Activated CD4-positive, alpha-beta memory T cell treated with anti-CD3 and anti-CD28 coated beads for 36 hours (primary cell): ENCODE measurements at regions of chr6 and their contacts with region 1.

Region 1: DNA sequence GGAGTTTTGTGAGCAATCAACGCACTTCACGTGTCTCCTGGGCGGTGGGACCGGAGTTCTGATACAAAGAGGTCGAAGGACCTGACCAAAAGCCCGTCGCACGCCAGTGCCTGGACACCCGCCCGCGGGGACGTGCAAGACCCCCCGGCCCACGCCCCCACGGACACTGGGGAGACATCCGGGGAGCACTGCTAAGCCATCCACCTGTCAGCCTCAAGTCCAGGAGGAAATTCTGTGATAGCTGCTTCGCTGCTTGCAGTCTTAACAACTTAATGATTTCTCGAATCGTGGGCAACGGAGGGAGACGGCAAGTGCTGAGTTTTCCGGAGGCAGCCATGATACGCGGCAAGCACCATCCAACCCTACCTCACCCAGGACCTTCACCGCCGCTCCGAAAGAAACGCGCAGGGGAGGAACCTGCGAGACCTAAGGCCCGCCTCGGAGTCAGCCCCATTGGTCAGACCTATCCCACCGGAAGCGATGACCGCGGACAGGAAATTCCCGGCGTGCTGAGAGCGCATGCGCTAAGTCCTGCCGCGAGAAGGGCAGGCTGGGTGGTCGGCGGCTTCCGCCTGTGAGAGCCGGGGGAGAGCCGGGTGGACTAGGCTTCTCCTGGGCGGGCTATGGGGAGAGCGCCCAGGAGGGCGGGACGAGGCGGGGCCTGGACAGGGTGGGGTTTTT is at the start of gene TFB1M:
- DNase-seq: peak; percentile 99
- H3K4me3 Mint-ChIP-seq: peak within 1 kb of the TSS; percentile 98
- H3K27ac Mint-ChIP-seq: peak within 1 kb of the TSS; percentile 96
- H3K4me1 Mint-ChIP-seq: peaks cover 38% of the 10 kb centered on the region
- H3K27me3 Mint-ChIP-seq: no peaks in the 10 kb centered on the region
- total RNA-seq, gene TFB1M: 45.1 to 48.5 TPM

Region 2: GRCh38 chr6:154432533-154433476 is 881.4 kb before region 1 on chr6:
- CTCF ChIA-PET with region 1: no interaction called
- POLR2A ChIA-PET with region 1: no interaction called
- intact Hi-C with region 1: no loop called
- DNase-seq: no peak
- H3K4me3 Mint-ChIP-seq: no peak overlapping the region
- H3K27ac Mint-ChIP-seq: no peak overlapping the region
- H3K4me1 Mint-ChIP-seq: no peaks in the 10 kb centered on the region
- H3K27me3 Mint-ChIP-seq: no peaks in the 10 kb centered on the region

Region 3: DNA sequence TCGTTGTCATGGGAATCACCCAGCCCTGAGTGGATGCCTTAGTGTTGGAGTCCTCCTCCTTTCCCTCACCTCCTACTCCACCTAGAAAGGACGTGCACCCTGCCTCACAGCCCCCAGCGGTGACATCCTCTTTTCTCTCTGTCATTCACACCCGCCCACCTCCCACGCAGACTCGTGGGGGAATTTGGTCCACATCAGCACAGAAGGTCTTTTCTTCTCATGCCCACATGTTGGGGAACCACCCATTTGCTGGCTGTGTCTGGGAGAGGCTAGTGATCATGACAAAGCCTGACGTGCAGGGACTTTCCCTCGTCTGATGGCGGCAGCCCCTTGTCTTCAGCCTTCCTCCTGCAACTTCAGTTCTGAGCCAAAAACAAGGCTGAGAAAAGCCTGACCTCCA is 707.8 kb before region 1 on chr6:
- CTCF ChIA-PET with region 1: no interaction called
- POLR2A ChIA-PET with region 1: no interaction called
- intact Hi-C with region 1: loop called (anchors 5 kb)
- DNase-seq: peak; percentile 96
- H3K4me3 Mint-ChIP-seq: peak overlapping the region; percentile 24
- H3K27ac Mint-ChIP-seq: peak overlapping the region; percentile 67
- H3K4me1 Mint-ChIP-seq: peaks cover 43% of the 10 kb centered on the region
- H3K27me3 Mint-ChIP-seq: peaks cover 4% of the 10 kb centered on the region

Region 4: DNA sequence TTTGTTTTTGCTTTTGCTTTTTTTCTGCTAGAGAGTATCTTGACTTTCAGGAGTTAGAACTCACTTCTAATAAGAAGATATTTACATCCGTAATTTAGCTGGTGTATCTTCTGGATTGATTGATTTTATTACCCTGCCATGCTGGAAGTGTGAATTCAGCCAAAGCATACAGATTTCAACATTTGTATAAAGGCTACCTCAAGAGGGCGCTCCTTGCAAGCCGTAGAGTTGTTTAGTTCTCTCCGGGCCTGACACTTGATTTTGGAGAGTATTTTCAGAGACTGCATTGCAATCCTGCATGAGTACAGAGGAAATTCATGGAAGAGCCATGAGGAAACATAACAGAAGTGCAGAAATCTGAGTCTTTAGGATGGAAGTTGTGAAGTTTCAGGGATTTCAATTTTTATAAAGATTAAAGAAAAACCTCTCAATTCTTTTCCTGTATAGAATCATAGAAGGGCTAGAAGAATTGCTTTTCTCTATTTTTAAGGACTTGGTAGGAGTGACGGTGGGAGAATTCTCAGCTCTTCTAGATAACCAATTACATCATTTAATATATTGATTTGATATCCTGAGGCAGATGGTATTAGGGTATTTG is 385.8 kb before region 1 on chr6:
- CTCF ChIA-PET with region 1: interaction called, 5 read pairs
- POLR2A ChIA-PET with region 1: no interaction called
- intact Hi-C with region 1: loop called (anchors 2 kb)
- DNase-seq: peak; percentile 77
- H3K4me3 Mint-ChIP-seq: no peak overlapping the region
- H3K27ac Mint-ChIP-seq: no peak overlapping the region
- H3K4me1 Mint-ChIP-seq: peaks cover 9% of the 10 kb centered on the region
- H3K27me3 Mint-ChIP-seq: no peaks in the 10 kb centered on the region

Region 5: DNA sequence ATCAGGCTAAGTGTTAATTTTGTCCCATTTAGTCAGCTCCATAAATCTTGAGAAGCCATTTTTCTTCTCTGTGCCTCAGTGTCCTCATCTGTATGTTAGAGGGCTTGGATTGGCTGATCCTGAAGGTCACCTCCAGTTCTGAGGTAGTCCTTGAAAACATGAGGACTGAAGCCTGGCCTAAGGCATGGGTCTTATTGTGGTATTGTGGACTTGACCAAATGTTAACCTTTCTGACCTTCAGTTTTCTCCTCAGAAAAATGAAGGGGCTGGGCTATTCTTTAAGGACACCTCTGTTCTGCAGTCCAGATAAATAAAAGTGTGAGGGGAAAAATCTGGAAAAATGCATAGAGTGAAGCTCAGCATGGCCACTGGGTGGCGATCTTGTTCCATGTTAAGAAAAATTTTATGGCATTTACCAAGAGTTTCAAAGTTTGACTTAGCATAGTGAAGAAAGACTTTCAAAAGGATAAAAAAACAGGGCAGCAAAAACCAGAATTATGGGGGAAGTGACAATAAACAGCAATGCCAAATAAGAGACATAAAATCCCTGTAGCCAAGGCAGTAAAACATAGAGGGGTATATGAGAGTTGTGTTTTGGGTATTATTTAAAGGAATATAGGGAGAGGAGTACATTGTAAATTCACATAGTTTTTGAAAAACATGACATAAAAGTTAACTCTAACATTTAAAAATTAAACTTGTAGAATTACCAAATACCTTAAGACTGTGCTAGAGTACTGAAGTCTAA is 13.3 kb after region 1 on chr6:
- CTCF ChIA-PET with region 1: interaction called, 26 read pairs
- POLR2A ChIA-PET with region 1: interaction called, 4 read pairs
- intact Hi-C with region 1: no loop called
- DNase-seq: peak; percentile 71
- H3K4me3 Mint-ChIP-seq: no peak overlapping the region
- H3K27ac Mint-ChIP-seq: peak overlapping the region; percentile 44
- H3K4me1 Mint-ChIP-seq: peaks cover 13% of the 10 kb centered on the region
- H3K27me3 Mint-ChIP-seq: no peaks in the 10 kb centered on the region

Region 6: DNA sequence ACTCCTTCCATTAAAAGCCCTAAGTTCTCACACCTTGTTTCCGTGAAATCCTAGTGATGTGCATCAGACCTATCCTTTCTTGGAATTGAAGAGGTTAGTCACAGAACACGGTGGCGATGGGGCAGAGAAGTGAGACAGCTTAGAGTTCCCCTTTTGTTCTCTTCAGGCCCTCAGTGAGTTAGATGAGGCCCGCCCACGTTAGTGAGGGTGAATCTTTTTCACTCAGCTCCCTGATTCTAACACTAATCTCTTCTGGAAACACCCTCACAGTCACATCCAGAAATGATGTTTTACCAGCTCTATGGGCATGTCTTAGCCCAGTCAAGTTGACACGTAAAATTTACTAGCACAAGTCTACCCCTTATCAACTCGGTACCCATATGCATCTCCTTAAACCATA is 314.1 kb after region 1 on chr6:
- CTCF ChIA-PET with region 1: no interaction called
- POLR2A ChIA-PET with region 1: no interaction called
- intact Hi-C with region 1: loop called (anchors 1 kb)
- DNase-seq: peak; percentile 85
- H3K4me3 Mint-ChIP-seq: peak overlapping the region; percentile 8
- H3K27ac Mint-ChIP-seq: peak overlapping the region; percentile 95
- H3K4me1 Mint-ChIP-seq: peaks cover 18% of the 10 kb centered on the region
- H3K27me3 Mint-ChIP-seq: peaks cover 1% of the 10 kb centered on the region

Region 7: GRCh38 chr6:156776840-156777576 is 1462.8 kb after region 1 on chr6 and contains the start of gene ARID1B:
- CTCF ChIA-PET with region 1: no interaction called
- POLR2A ChIA-PET with region 1: interaction called, 3 read pairs
- intact Hi-C with region 1: loop called (anchors 5 kb)
- DNase-seq: peak; percentile 79
- H3K4me3 Mint-ChIP-seq: peak within 1 kb of the TSS; percentile 83
- H3K27ac Mint-ChIP-seq: peak within 1 kb of the TSS; percentile 95
- H3K4me1 Mint-ChIP-seq: peaks cover 20% of the 10 kb centered on the region
- H3K27me3 Mint-ChIP-seq: no peaks in the 10 kb centered on the region
- total RNA-seq, gene ARID1B: 39.0 to 41.5 TPM

Region 8: GRCh38 chr6:157274471-157275226 is 1960.4 kb after region 1 on chr6:
- CTCF ChIA-PET with region 1: no interaction called
- POLR2A ChIA-PET with region 1: no interaction called
- intact Hi-C with region 1: loop called (anchors 10 kb)
- DNase-seq: peak; percentile 90
- H3K4me3 Mint-ChIP-seq: peak overlapping the region; percentile 76
- H3K27ac Mint-ChIP-seq: peak overlapping the region; percentile 89
- H3K4me1 Mint-ChIP-seq: peaks cover 5% of the 10 kb centered on the region
- H3K27me3 Mint-ChIP-seq: no peaks in the 10 kb centered on the region